Calu3 (cell line): ENCODE measurements at regions of chr12 and their contacts with region 1.

Region 1: GRCh38 chr12:49959570-49960465 is 1.9 kb upstream of the AQP5 start:
- DNase-seq: peak; percentile 80
- H3K4me3 Mint-ChIP-seq: peak overlapping the region; percentile 68
- H3K27ac Mint-ChIP-seq: peak overlapping the region; percentile 88
- H3K4me1 Mint-ChIP-seq: peaks cover 53% of the 10 kb centered on the region
- H3K27me3 Mint-ChIP-seq: peaks cover 14% of the 10 kb centered on the region
- CTCF ChIP-seq: no peak

Region 2: DNA sequence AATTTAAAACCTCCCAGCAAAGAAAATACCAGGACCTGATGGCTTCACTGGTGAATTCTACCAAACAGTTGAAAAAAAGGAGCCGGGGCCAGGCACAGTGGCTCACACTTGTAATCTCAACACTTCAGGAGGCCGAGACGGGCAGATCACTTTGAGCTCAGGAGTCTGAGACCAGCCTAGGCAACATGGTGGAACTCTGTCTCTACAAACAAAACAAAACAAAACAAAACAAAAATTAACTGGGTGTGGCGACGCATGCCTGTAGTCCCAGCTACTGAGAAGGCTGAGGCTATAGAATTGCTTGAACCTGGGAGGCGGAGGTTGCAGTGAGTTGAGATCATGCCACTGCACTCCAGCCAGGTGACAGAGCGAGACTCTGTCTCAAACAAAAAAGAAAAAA is 650.4 kb before region 1 on chr12:
- CTCF ChIA-PET with region 1: no interaction called
- intact Hi-C with region 1: no loop called
- DNase-seq: no peak
- H3K4me3 Mint-ChIP-seq: no peak overlapping the region
- H3K27ac Mint-ChIP-seq: peak overlapping the region; percentile 42
- H3K4me1 Mint-ChIP-seq: no peaks in the 10 kb centered on the region
- H3K27me3 Mint-ChIP-seq: peaks cover 36% of the 10 kb centered on the region
- CTCF ChIP-seq: no peak

Region 3: GRCh38 chr12:49945394-49946080 is 14.3 kb before region 1 on chr12:
- CTCF ChIA-PET with region 1: interaction called, 20 read pairs
- intact Hi-C with region 1: no loop called
- DNase-seq: peak; percentile 88
- H3K4me3 Mint-ChIP-seq: peak overlapping the region; percentile 27
- H3K27ac Mint-ChIP-seq: peak overlapping the region; percentile 35
- H3K4me1 Mint-ChIP-seq: peaks cover 32% of the 10 kb centered on the region
- H3K27me3 Mint-ChIP-seq: no peaks in the 10 kb centered on the region
- CTCF ChIP-seq: peak; percentile 74